RWPE1 (cell line): ENCODE measurements at regions of chr20 and their contacts with region 1.

Region 1: GRCh38 chr20:45044084-45044573 is 56.8 kb downstream of the KCNS1 start:
- DNase-seq: peak; percentile 74
- H3K27ac ChIP-seq: peak overlapping the region; percentile 32; the same call in 1 of the 2 replicates
- CTCF ChIP-seq: peak; percentile 99

Region 2: DNA sequence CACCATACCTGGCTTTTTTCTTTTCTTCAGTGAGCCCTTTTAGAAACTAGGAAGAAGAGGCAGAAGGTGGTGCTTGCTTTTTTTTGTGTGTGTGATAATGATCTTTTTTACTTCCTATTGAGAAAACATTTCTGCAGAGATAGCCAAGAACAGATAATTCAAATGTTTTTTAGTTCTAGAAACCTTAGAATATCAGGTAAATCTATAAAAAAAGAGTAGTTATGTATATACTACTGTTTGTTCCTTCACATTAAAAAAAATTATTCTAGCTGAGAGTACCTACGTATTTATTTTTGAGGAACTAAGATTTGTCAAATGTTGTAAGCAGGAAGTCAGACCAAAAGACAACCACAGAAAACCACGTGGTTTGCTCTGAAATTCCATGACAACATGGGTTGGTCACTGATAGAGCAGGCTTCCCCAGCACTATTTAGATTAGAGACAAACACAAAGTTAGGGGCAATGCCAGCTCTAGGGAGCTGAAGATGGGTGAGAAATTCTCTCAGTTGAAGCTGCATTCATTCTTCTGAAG is 65.0 kb before region 1 on chr20:
- CTCF ChIA-PET with region 1: no interaction called
- POLR2A ChIA-PET with region 1: no interaction called
- DNase-seq: no peak
- H3K27ac ChIP-seq: no peak overlapping the region
- CTCF ChIP-seq: no peak

Region 3: DNA sequence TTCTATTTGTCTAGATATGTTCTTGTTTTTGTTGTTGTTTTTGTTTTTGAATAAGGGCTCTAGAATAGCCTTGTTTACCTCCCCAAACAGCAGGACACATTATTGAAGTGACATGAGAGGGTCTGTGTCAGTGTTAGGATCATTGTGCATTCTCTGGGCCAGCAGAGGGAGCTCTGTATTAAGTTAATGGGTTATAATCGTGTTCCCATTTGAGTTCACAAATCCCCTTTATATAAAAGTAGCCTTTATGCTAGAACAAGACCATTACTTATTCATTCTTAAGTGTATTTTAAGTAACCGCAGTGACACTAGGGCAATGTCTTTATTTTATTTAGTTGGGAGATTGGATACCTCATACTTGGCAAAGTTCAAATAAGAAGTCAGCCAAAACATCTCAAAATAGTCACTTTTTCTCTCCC is 33.0 kb before region 1 on chr20:
- CTCF ChIA-PET with region 1: interaction called, 22 read pairs
- POLR2A ChIA-PET with region 1: no interaction called
- DNase-seq: peak; percentile 77
- H3K27ac ChIP-seq: no peak overlapping the region
- CTCF ChIP-seq: peak; percentile 95

Region 4: DNA sequence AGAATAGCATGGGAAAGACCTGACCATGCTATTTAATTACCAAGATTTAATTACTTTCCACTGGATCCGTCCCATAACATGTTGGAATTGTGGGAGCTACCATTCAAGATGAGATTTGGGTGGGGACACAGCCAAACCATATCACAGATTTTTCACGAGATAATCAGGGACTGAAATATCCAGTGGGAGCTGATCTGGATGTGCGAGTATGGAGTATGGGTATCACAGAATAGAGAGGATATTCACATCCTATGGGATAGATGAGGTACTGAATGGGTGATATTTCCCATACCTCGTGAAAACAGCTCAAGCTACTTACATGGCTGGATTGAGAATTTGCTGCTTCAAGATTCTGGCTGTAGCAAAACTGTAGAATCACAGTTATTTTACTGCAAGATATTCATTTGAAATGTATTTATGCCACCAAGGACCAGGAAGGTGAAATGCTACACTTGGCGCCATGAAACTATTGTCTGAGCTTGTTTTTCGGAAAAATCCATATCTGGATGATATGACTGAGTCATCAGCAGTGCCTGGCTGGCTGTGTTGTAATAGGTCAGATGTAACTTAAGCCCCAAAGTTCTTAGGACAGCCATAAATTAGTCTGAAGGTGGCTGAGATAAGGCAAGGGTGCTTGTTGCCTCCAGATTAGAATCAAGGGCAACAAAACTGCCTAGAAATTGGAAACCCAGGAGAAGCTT is 27.0 kb after region 1 on chr20:
- CTCF ChIA-PET with region 1: interaction called, 22 read pairs
- POLR2A ChIA-PET with region 1: no interaction called
- DNase-seq: peak; percentile 94
- H3K27ac ChIP-seq: peak overlapping the region; percentile 75
- CTCF ChIP-seq: no peak

Region 5: DNA sequence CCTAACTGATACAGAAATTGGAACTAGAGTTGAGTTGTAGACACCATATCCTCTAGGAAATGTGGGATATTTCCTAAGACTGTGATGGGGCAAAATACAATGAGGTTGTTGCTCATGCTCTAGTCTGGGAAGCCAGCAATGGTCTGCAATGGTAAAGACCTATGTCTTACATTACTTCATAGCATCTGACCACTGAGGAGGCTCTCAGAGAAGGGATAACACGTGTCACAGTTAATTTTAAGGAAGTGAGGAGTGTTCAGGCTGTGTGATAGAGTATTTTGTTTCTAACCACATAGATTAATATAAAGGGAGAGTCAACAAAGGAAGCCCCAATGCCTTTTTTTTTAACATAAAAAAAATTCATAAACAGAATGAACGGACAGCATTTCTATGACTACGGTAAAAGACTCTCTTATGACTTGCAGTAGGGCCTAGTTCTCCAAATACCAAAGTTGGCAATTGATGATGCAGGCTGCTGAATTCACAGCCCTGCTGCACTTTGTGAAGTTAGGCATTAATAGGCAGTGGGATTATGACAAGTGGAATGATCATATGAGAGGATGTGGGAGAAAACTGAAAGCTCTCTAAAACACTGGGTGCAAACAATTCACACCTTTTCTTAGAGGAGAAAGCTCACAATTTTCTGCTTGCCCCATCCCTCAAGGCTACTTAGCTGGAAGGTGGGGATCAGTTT is 43.1 kb after region 1 on chr20:
- CTCF ChIA-PET with region 1: interaction called, 171 read pairs
- POLR2A ChIA-PET with region 1: no interaction called
- DNase-seq: no peak
- H3K27ac ChIP-seq: no peak overlapping the region
- CTCF ChIP-seq: no peak

Region 6: GRCh38 chr20:45104786-45105185 is 60.7 kb after region 1 on chr20:
- CTCF ChIA-PET with region 1: interaction called, 32 read pairs
- POLR2A ChIA-PET with region 1: no interaction called
- DNase-seq: peak; percentile 58
- H3K27ac ChIP-seq: no peak overlapping the region
- CTCF ChIP-seq: no peak

Region 7: DNA sequence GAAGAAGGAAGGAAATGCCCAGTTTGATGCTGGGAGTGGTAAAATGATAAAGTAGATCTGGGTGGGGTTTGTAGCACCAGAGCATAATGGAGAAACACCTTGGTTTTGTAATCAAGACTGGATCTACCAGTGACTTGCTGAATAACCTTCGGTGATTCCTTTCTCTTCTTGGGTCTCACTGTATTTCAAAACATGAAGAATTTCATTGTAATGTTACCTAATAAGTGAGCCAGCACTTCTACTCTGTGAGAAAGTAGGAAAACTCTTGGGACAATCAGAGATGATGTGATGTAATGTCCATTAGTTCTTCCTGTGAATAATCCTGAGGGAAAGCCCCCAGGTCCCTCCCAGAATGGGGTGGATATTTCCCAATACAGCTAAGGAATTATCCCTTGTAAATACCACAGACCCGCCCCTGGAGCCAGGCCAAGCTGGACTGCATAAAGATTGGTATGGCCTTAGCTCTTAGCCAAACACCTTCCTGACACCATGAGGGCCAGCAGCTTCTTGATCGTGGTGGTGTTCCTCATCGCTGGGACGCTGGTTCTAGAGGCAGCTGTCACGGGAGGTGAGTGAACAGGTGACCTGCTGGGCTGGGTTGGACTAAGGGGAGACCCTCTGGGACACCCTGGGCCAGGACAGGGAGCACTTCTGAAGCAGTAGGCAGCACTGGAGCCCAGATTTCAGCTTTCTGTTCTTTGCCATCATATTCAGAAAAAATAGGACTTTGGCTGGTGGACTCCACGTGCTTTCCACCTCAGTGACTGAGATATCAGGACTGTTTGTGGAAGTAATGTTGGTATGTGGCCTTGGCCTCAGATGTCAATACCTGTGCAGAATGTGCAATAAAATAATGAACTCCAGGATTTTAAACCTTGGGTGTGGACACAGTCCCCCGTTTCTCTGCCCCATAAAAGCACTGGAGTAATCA is 130.6 kb after region 1 on chr20 and contains the start of gene PI3:
- CTCF ChIA-PET with region 1: no interaction called
- POLR2A ChIA-PET with region 1: no interaction called
- DNase-seq: peak; percentile 98
- H3K27ac ChIP-seq: peak within 1 kb of the TSS; percentile 66
- CTCF ChIP-seq: no peak

Region 8: GRCh38 chr20:45293041-45294002 is 249.2 kb after region 1 on chr20:
- CTCF ChIA-PET with region 1: interaction called, 75 read pairs
- POLR2A ChIA-PET with region 1: no interaction called
- DNase-seq: peak; percentile 96
- H3K27ac ChIP-seq: peak overlapping the region; percentile 57
- CTCF ChIP-seq: peak; percentile 100

Region 9: DNA sequence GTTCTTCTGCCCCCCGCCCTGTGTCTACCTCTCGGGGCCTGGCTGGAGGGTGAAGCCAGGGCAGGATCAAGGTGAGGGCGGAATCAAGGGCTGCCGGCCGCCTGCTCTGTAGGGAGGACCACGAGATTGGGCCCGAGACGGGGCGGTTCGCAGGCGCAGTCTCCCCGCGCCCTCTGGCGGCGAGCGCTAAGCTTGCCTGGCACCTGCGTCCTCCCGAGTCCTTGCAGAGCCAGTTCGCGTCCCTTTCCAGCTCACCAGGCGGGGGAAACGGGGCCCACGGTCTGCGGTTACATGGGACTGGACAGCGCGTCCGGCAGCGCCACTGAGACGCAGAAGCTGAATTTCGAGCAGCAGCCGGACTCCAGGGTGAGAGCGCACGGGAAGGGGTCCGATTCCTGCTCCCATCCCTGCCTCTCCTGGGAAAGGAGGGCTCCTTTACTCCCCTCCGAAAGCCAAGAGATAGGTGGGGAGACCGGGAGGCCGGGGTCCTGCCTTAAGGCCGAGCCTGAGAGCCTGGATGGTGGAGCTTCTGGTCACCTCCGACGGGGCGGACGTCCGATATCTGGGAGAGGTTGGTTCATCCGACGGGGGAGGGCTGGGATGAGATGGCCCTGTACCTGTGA is 267.6 kb after region 1 on chr20:
- CTCF ChIA-PET with region 1: interaction called, 19 read pairs
- POLR2A ChIA-PET with region 1: no interaction called
- DNase-seq: peak; percentile 79
- H3K27ac ChIP-seq: no peak overlapping the region
- CTCF ChIP-seq: peak; percentile 98

Region 10: DNA sequence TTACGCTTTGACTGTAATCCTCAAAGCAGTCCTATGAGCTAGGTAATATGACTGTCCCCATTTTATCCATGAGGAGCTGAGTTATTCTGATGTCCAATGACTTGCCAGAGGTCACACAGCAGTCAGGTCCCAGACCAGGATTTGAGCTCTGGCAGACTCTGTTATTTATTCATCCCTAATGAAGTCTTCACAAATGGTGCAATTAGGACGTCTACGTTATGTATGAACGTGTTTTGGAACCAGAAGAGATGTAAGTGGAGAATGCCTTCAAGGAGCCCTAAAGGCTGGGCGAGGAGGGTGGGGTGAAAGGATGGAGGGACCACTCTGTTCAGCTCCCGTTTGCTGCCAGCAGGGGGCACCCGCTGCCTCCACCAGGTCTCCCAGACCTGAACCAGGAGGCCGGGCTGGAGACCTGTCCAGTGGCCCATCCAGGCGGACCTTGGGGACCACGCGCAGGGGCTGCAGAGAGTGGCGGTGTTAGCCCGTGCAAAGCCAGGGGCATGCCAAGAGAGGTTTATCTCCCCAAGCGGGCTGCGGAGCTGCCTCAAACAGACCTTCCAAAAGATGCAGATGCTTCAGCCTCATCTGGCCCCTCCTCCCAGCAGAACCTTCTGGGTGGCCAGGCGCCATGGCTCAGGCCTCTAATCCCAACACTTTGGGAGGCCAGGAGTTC is 943.1 kb after region 1 on chr20:
- CTCF ChIA-PET with region 1: no interaction called
- POLR2A ChIA-PET with region 1: no interaction called
- DNase-seq: peak; percentile 88
- H3K27ac ChIP-seq: no peak overlapping the region
- CTCF ChIP-seq: peak; percentile 95